GM12878 (cell line): ENCODE measurements at regions of chr20 and their contacts with region 1.

Region 1: DNA sequence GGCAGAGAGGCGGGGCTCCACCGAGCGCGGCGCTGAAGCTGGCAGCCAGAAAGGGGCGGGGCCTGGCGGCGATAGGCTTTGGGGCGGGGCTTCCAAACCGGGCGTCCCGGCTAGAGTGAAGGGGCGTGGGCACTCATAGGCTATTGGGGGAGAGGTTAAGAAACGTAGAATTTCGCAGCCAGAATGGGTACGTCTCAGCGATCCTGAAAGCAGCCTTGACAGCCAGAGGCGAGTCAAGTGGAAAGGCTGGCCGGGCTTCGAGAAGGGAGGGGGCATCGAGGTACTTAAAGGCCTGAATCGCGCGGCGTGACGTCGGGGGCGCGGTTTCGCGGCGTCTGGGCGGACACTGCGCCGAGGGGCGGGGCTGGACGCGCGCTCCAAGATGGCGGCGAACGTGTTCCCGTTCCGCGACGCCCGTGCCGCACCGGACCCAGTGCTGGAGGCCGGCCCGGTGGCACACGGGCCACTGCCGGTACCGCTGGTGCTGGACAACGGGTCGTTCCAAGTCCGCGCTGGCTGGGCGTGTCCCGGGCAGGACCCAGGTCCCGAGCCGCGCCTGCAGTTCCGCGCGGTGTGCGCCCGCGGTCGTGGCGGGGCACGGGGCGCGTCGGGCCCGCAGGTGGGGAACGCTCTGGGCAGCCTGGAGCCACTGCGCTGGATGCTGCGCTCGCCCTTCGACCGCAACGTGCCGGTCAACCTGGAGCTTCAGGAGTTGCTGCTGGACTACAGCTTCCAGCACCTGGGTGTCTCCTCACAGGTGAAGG is at the start of gene ACTR5:
- DNase-seq: peak; percentile 76
- ATAC-seq: peak; percentile 94
- H3K4me3 ChIP-seq: peak within 1 kb of the TSS; percentile 75
- H3K27ac ChIP-seq: peak within 1 kb of the TSS; percentile 71
- H3K4me1 ChIP-seq: peaks cover 8% of the 10 kb centered on the region; the same call in 1 of the 2 replicates
- H3K27me3 ChIP-seq: no peaks in the 10 kb centered on the region
- CTCF ChIP-seq: no peak
- EP300 ChIP-seq: no peak
- POLR2A ChIP-seq: peak; percentile 94
- RAD21 ChIP-seq: no peak
- polyA plus RNA-seq, gene ACTR5: 0.52 to 1.7 TPM

Region 2: GRCh38 chr20:38633577-38634093 is 114.6 kb before region 1 on chr20:
- CTCF ChIA-PET with region 1: interaction called, 12 read pairs
- POLR2A ChIA-PET with region 1: no interaction called
- RAD21 ChIA-PET with region 1: interaction called, 5 read pairs
- SMC1A ChIA-PET with region 1: interaction called, 16 read pairs
- in situ Hi-C with region 1: no loop called
- intact Hi-C with region 1: no loop called
- DNase-seq: no peak
- ATAC-seq: peak; percentile 98
- H3K4me3 ChIP-seq: no peak overlapping the region
- H3K27ac ChIP-seq: no peak overlapping the region
- H3K4me1 ChIP-seq: no peaks in the 10 kb centered on the region
- H3K27me3 ChIP-seq: peaks cover 2 to 3% of the 10 kb centered on the region in 2 experiments; a peak in 3 of 4 replicates
- CTCF ChIP-seq: peak; percentile 86 to 96 (median 96)
- EP300 ChIP-seq: no peak
- POLR2A ChIP-seq: no peak
- RAD21 ChIP-seq: peak; percentile 64

Region 3: GRCh38 chr20:38676576-38676975 is 71.7 kb before region 1 on chr20:
- CTCF ChIA-PET with region 1: no interaction called
- POLR2A ChIA-PET with region 1: no interaction called
- RAD21 ChIA-PET with region 1: no interaction called
- SMC1A ChIA-PET with region 1: no interaction called
- in situ Hi-C with region 1: no loop called
- intact Hi-C with region 1: no loop called
- DNase-seq: no peak
- ATAC-seq: no peak
- H3K4me3 ChIP-seq: no peak overlapping the region
- H3K27ac ChIP-seq: no peak overlapping the region
- H3K4me1 ChIP-seq: peaks cover 4% of the 10 kb centered on the region; the same call in 1 of the 2 replicates
- H3K27me3 ChIP-seq: peaks cover 2 to 8% of the 10 kb centered on the region in 2 experiments; a peak in 3 of 4 replicates
- CTCF ChIP-seq: no peak
- EP300 ChIP-seq: no peak
- POLR2A ChIP-seq: no peak
- RAD21 ChIP-seq: no peak

Region 4: DNA sequence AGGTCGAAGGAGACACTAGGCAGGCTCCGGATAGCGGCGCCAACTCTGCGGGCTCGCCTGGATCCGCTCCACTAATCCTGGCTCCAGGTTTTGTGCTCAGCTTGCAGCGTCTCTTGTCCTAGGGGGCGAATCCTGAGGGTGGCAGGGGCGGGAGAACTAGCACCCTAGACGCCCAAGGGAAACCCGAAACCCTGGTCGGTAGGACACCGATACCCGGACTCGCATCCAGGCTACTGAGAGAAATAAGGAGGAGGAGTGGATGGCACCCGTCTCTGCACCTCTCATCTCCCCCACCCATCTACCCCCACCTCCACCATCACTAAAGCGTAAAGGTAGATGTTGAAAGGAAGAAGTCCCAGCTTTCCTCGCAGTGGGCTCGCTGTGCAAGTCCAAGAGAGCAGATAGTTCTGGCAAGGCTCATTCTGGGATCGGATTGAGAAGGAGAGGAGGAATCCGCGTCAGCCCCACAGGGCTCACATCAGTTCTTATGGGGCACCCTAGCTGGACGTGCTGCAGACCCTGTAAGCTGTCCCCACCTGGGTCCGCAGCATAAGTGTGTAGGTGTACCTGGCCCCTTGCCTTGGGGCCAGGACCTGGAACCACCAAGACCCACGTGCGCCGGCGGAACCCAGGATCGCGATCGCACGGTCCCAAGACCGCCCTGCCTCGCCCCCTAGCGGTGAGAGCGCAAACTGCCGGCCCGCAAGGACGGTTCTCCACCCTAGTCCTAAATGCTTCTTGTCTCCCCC is 17.1 kb before region 1 on chr20:
- CTCF ChIA-PET with region 1: interaction called, 22 read pairs
- POLR2A ChIA-PET with region 1: no interaction called
- RAD21 ChIA-PET with region 1: interaction called, 4 read pairs
- SMC1A ChIA-PET with region 1: interaction called, 3 read pairs
- in situ Hi-C with region 1: no loop called
- intact Hi-C with region 1: no loop called
- DNase-seq: no peak
- ATAC-seq: peak; percentile 94
- H3K4me3 ChIP-seq: peak overlapping the region; percentile 35; the same call in 1 of the 2 replicates
- H3K27ac ChIP-seq: no peak overlapping the region
- H3K4me1 ChIP-seq: peaks cover 8% of the 10 kb centered on the region
- H3K27me3 ChIP-seq: peaks cover 28 to 53% of the 10 kb centered on the region in 2 experiments
- CTCF ChIP-seq: peak; percentile 87 to 99 (median 98)
- EP300 ChIP-seq: no peak
- POLR2A ChIP-seq: no peak
- RAD21 ChIP-seq: peak; percentile 53

Region 5: DNA sequence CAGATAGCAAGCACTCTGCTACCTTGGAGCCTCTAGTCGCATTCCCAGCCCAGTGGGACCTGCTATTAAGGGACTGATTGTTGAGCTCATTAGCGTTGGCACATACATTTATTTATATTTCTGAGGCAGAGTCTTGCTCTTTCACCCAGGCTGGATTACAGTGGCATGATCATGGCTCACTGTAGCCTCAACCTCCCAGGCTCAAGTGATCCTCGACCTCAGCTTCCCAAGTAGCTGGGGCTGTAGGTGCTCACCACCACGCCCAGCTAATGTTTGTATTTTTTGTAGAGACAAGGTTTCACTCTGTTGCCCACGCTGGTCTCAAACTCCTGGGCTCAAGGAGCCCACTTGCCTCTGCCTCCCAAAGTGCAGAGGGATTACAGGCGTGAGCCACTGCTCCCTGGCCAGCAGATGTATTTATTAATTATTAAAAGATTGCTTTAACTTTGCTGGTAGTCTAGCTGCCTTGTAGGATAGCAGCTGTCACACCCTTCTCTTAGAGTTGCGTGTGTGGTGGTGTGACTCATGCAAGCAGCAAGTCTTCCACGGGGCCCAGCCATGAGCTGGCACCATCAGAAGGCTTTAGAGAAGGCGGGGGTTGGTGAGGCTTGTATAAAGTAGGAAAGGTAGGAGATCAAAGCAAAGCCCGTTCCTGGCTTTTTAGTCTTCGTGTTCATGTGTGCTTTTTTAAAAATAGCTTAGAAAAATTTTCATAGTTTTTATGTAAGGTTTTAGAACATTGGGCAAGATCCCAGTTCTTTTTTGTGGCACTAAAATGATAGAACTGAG is 16.5 kb after region 1 on chr20:
- CTCF ChIA-PET with region 1: interaction called, 74 read pairs
- POLR2A ChIA-PET with region 1: interaction called, 5 read pairs
- RAD21 ChIA-PET with region 1: interaction called, 5 read pairs
- SMC1A ChIA-PET with region 1: interaction called, 13 read pairs
- in situ Hi-C with region 1: no loop called
- intact Hi-C with region 1: no loop called
- DNase-seq: no peak
- ATAC-seq: no peak
- H3K4me3 ChIP-seq: no peak overlapping the region
- H3K27ac ChIP-seq: no peak overlapping the region
- H3K4me1 ChIP-seq: no peaks in the 10 kb centered on the region
- H3K27me3 ChIP-seq: no peaks in the 10 kb centered on the region
- CTCF ChIP-seq: no peak
- EP300 ChIP-seq: no peak
- POLR2A ChIP-seq: no peak
- RAD21 ChIP-seq: no peak

Region 6: GRCh38 chr20:38805502-38805957 is 57.3 kb after region 1 on chr20 and contains the start of gene PPP1R16B:
- CTCF ChIA-PET with region 1: interaction called, 50 read pairs
- POLR2A ChIA-PET with region 1: interaction called, 5 read pairs
- RAD21 ChIA-PET with region 1: interaction called, 7 read pairs
- SMC1A ChIA-PET with region 1: interaction called, 42 read pairs
- in situ Hi-C with region 1: no loop called
- intact Hi-C with region 1: no loop called
- DNase-seq: no peak
- ATAC-seq: peak; percentile 78
- H3K4me3 ChIP-seq: peak within 1 kb of the TSS; percentile 87
- H3K27ac ChIP-seq: peak within 1 kb of the TSS; percentile 84
- H3K4me1 ChIP-seq: peaks cover 31% of the 10 kb centered on the region
- H3K27me3 ChIP-seq: no peaks in the 10 kb centered on the region
- CTCF ChIP-seq: no peak
- EP300 ChIP-seq: no peak
- POLR2A ChIP-seq: peak; percentile 96
- RAD21 ChIP-seq: no peak
- polyA plus RNA-seq, gene PPP1R16B: 13.4 to 14.2 TPM

Region 7: GRCh38 chr20:38883081-38883980 is 135.1 kb after region 1 on chr20:
- CTCF ChIA-PET with region 1: interaction called, 8 read pairs
- POLR2A ChIA-PET with region 1: no interaction called
- RAD21 ChIA-PET with region 1: no interaction called
- SMC1A ChIA-PET with region 1: interaction called, 10 read pairs
- in situ Hi-C with region 1: no loop called
- intact Hi-C with region 1: no loop called
- DNase-seq: no peak
- ATAC-seq: no peak
- H3K4me3 ChIP-seq: no peak overlapping the region
- H3K27ac ChIP-seq: peak overlapping the region; percentile 19; the same call in 1 of the 2 replicates
- H3K4me1 ChIP-seq: peaks cover 34% of the 10 kb centered on the region
- H3K27me3 ChIP-seq: no peaks in the 10 kb centered on the region
- CTCF ChIP-seq: no peak
- EP300 ChIP-seq: no peak
- POLR2A ChIP-seq: 0 out of 2 replicates have a peak, but pooled peaks have one; percentile 18
- RAD21 ChIP-seq: no peak